H1 (cell line): ENCODE measurements at regions of chr19 and their contacts with region 1.

Region 1: DNA sequence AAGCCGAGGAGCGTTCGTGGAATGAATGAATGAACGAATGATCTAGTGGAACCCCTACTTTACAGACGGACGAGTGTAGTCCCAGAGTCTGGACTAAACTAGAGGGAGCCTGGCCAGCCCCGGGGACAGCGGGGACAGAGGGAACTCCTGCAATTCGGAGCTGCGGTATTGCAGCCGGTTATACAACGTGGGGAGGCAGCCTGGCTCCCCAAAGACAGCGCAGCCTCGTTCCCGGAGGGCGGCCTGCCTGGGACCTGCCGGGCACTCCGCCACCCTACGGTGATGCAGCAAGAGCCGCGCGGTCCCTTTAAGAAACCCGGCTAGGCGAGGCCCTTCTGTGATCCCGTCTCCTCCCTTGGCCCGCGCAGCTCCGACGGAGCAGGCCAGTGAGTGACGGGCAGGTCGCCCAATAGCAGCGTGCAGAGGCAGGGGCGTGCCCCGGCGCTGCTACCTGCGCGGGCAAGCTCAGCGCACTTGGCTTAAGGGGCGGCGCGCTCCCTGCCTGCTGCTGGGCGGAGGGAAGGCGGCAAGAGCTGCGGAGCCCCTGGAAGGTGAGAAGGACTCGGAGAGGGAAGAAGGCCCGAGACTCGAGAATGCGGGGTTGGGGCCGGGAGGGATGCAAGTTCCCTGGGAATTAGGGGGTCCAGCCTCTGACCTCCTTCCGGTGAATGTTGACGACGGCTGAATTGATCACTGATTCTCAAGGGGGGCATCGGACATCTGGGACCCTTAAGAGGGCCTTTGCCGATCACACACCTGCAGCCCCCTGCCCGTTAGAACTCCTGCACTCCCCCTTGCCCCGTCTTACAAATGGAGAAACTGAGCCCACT is at the start of gene ABCA7:
- DNase-seq: peak; percentile 98 to 100
- H3K4me3 ChIP-seq: peak within 1 kb of the TSS; percentile 53 to 76 (median 64)
- H3K27ac ChIP-seq: 0 out of 2 replicates have a peak within 1 kb of the TSS, but pooled peaks have one; percentile 9
- H3K4me1 ChIP-seq: peaks cover 0 to 10% (median 9%) of the 10 kb centered on the region in 4 experiments; a peak in 6 of 7 replicates
- H3K27me3 ChIP-seq: no peaks in the 10 kb centered on the region
- CTCF ChIP-seq: no peak
- EP300 ChIP-seq: no peak
- POLR2A ChIP-seq: peak in 1 of 2 experiments; percentile 16; a peak in 2 of 3 replicates
- RAD21 ChIP-seq: peak in 1 of 2 experiments; percentile 14; a peak in 1 of 4 replicates
- total RNA-seq, gene ABCA7: 25.6 and 29.7 TPM in 2 replicates

Region 2: DNA sequence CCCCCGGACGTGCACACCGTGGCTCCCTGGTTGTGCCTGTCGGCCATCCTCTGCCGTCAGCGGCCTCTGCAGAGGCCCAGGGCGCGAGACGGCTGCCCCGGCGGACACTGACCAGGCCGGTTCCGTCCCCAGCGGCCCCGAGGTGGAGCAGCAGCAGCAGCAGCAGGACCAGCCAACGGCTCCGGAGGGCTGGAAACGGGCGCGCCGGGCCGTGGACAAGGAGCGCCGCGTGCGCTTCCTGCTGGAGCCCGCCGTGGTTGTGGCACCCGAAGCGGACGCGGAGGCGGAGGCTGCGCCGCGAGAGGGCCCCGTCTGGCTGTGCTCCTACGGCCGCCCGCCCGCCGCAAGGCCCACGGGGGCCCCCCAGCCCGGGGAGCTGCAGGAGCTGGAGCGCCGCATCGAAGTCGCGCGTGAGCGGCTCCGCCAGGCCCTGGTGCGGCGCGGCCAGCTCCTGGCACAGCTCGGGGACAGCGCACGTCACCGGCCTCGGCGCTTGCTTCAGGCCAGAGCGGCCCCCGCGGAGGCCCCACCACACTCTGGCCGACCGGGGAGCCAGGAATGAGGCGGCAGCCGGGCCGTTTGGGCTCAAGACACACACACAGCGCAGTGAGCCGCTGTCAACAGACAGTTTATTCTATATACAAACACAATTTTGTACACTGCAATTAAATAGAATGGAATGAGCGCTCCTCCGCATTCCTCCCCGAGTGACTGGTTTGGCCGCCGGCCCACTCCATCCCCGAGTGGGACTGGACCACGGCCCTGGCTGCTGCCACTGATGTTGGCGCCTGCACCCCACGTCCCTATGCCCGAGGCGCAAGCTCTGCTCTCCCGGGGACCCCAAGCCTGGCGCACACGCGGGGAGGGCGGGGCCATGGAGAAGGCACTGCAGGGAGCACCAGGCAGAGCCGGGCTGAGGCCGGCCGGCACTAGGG is 30.6 kb before region 1 on chr19:
- CTCF ChIA-PET with region 1: interaction called, 5 read pairs
- POLR2A ChIA-PET with region 1: interaction called, 13 read pairs
- DNase-seq: no peak
- H3K4me3 ChIP-seq: no peak overlapping the region
- H3K27ac ChIP-seq: no peak overlapping the region
- H3K4me1 ChIP-seq: no peaks in the 10 kb centered on the region
- H3K27me3 ChIP-seq: no peaks in the 10 kb centered on the region
- CTCF ChIP-seq: no peak
- EP300 ChIP-seq: no peak
- POLR2A ChIP-seq: no peak
- RAD21 ChIP-seq: no peak

Region 3: DNA sequence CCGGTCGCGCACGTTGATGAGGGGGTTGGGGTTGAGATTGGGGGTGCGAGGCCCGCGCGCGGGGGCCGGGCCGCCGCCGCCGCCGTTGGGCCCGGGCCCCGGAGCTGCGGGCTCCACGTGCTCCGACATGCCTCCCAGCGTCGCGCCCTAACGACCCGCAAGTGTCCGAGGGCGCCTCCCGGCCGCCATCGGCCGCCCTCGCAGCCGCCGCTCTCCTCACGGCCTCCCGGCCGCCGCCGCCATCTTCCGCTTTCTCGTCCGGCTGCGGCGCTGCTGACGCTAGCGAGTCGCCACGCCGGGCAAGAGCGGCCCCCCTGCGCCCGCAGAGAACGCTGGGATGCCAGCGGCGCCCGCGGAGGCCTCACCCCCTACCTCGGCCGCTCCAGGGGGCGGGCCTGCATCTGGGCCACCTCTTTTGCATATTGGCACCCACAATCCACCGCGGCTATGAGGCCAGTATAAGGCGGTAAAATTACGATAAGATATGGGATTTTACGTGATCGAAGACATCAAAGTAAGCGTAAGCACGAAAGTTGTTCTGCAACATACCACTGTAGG is 18.9 kb before region 1 on chr19 and contains the start of gene TMEM259:
- CTCF ChIA-PET with region 1: interaction called, 4 read pairs
- POLR2A ChIA-PET with region 1: interaction called, 509 read pairs
- DNase-seq: peak; percentile 89 to 97
- H3K4me3 ChIP-seq: peak within 1 kb of the TSS; percentile 84 to 97 (median 94)
- H3K27ac ChIP-seq: peak within 1 kb of the TSS; percentile 96
- H3K4me1 ChIP-seq: peaks cover 0 to 31% (median 20%) of the 10 kb centered on the region in 4 experiments; a peak in 5 of 7 replicates
- H3K27me3 ChIP-seq: no peaks in the 10 kb centered on the region
- CTCF ChIP-seq: peak in 1 of 3 experiments; percentile 3; a peak in 1 of 4 replicates
- EP300 ChIP-seq: peak in 1 of 2 experiments; percentile 62; a peak in 1 of 3 replicates
- POLR2A ChIP-seq: no peak
- RAD21 ChIP-seq: peak in 1 of 2 experiments; percentile 8; a peak in 1 of 4 replicates
- total RNA-seq, gene TMEM259: 140 and 142 TPM in 2 replicates

Region 4: GRCh38 chr19:1057176-1057855 is 17.5 kb after region 1 on chr19:
- CTCF ChIA-PET with region 1: interaction called, 4 read pairs
- POLR2A ChIA-PET with region 1: interaction called, 10 read pairs
- DNase-seq: no peak
- H3K4me3 ChIP-seq: no peak overlapping the region
- H3K27ac ChIP-seq: no peak overlapping the region
- H3K4me1 ChIP-seq: peaks cover 0 to 2% (median 0%) of the 10 kb centered on the region in 4 experiments; a peak in 1 of 7 replicates
- H3K27me3 ChIP-seq: no peaks in the 10 kb centered on the region; a peak in 1 of 7 replicates
- CTCF ChIP-seq: no peak
- EP300 ChIP-seq: no peak
- POLR2A ChIP-seq: no peak
- RAD21 ChIP-seq: no peak

Region 5: GRCh38 chr19:1064661-1065605 is 25.1 kb after region 1 on chr19:
- CTCF ChIA-PET with region 1: interaction called, 27 read pairs
- POLR2A ChIA-PET with region 1: interaction called, 14 read pairs
- DNase-seq: peak in 1 of 2 experiments; percentile 88
- H3K4me3 ChIP-seq: peak overlapping the region in 2 of 4 experiments; percentile 9 to 54; a peak in 3 of 8 replicates
- H3K27ac ChIP-seq: no peak overlapping the region
- H3K4me1 ChIP-seq: peaks cover 0 to 27% (median 19%) of the 10 kb centered on the region in 4 experiments; a peak in 6 of 7 replicates
- H3K27me3 ChIP-seq: peaks cover 0 to 26% (median 18%) of the 10 kb centered on the region in 4 experiments; a peak in 5 of 7 replicates
- CTCF ChIP-seq: peak; percentile 65 to 86 (median 84)
- EP300 ChIP-seq: no peak
- POLR2A ChIP-seq: no peak
- RAD21 ChIP-seq: peak; percentile 38 to 60; a peak in 3 of 4 replicates

Region 6: GRCh38 chr19:1074544-1075283 is 34.9 kb after region 1 on chr19:
- CTCF ChIA-PET with region 1: interaction called, 6 read pairs
- POLR2A ChIA-PET with region 1: interaction called, 24 read pairs
- DNase-seq: no peak
- H3K4me3 ChIP-seq: no peak overlapping the region
- H3K27ac ChIP-seq: no peak overlapping the region
- H3K4me1 ChIP-seq: peaks cover 0 to 4% (median 1%) of the 10 kb centered on the region in 4 experiments; a peak in 2 of 7 replicates
- H3K27me3 ChIP-seq: peaks cover 0 to 4% (median 2%) of the 10 kb centered on the region in 4 experiments; a peak in 2 of 7 replicates
- CTCF ChIP-seq: no peak
- EP300 ChIP-seq: no peak
- POLR2A ChIP-seq: no peak
- RAD21 ChIP-seq: no peak

Region 7: DNA sequence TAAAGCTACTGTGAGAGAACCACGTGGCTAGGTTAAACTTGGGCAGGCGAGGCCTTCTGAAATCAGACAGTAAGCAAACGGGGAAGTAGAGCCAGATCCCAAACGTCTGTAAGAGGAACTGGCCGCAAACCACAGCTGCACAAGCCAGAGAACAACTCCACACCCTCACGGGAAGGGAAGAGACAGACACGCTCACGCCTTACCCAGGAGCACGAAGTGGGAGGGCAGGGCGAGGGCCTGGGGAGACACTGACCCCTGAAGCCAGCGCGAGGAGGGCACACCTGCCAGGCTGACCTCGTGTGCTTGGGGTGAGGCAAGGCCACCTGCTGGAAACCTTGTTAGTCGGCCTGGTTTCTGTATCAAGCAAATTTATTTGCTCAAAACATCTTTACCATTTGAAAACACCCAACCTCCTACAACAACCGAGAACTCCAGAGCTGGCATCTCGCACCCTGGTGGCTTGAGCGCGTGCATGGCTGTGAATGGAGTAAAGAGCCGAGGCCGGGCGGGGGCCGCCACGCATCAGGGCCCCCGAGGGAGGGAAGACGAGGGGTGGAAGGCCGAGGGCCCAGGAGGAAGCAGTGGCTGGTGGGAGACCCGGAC is 48.1 kb after region 1 on chr19:
- CTCF ChIA-PET with region 1: no interaction called
- POLR2A ChIA-PET with region 1: interaction called, 10 read pairs
- DNase-seq: no peak
- H3K4me3 ChIP-seq: no peak overlapping the region
- H3K27ac ChIP-seq: no peak overlapping the region
- H3K4me1 ChIP-seq: no peaks in the 10 kb centered on the region; a peak in 1 of 7 replicates
- H3K27me3 ChIP-seq: no peaks in the 10 kb centered on the region; a peak in 1 of 7 replicates
- CTCF ChIP-seq: no peak
- EP300 ChIP-seq: no peak
- POLR2A ChIP-seq: no peak
- RAD21 ChIP-seq: no peak